Activated T-helper 1 cell treated with anti-CD3 and anti-CD28 coated beads, Interleukin-12 subunit alpha, Interleukin-12 subunit beta, Interleukin-2, Interleukin-4 antibody, amounts not matched to agents 30 ng/mL and 10 ng/mL and 1 ng/mL, durations not matched to agents 14 hours and 24 hours and 36 hours (primary cell): ENCODE measurements at regions of chr20 and their contacts with region 1.

Region 1: DNA sequence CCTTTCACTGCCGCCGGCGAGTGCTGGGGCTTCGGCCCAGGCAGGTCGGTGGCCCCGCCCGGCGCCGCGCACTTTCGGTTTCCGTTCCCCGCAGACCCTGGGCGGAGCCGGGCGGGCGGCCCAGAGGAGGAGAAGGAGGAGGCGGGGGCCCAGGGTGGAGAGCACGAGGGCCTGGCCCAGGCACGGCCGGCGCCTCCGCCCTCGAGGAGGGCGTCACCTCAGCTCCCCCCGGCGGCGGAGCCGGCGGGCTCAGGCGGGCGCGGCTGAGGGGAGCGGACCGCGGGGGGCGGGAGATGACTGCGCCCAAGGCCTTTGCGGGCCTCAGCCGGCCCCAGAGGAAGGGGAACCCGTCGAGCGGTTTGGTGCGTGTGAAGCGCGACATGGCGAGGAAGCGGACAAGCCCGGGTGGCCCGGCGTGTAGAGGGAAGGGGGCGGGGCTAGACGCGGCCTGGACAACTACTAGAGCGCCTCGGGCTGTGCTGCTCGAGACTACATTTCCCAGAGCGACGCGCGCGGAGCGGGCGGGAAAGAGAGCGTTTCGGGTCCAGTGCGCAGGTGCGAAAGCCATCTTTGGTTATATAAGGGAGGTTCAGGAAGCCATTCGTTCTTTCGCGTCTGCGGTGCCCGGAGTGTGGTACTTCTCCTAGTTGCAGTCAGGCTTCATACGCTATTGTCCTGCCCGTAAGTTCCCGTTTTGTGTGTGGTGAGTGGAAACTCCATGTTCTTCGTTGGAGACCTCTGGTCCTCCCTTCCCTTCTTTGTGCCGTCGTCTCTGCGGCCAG is at the start of gene ZNFX1:
- DNase-seq: peak; percentile 98
- H3K4me3 Mint-ChIP-seq: peak within 1 kb of the TSS; percentile 99
- H3K27ac Mint-ChIP-seq: peak within 1 kb of the TSS; percentile 98
- H3K4me1 Mint-ChIP-seq: peaks cover 61% of the 10 kb centered on the region
- H3K27me3 Mint-ChIP-seq: no peaks in the 10 kb centered on the region
- total RNA-seq, gene ZNFX1: 68.9 and 70.4 TPM in 2 replicates

Region 2: GRCh38 chr20:49046087-49046900 is 231.9 kb before region 1 on chr20 and contains the start of gene CSE1L:
- intact Hi-C with region 1: loop called (anchors 1 kb)
- DNase-seq: peak; percentile 94
- H3K4me3 Mint-ChIP-seq: peak within 1 kb of the TSS; percentile 88
- H3K27ac Mint-ChIP-seq: peak within 1 kb of the TSS; percentile 99
- H3K4me1 Mint-ChIP-seq: peaks cover 27% of the 10 kb centered on the region
- H3K27me3 Mint-ChIP-seq: peaks cover 2% of the 10 kb centered on the region
- total RNA-seq, gene CSE1L: 112 and 119 TPM in 2 replicates

Region 3: DNA sequence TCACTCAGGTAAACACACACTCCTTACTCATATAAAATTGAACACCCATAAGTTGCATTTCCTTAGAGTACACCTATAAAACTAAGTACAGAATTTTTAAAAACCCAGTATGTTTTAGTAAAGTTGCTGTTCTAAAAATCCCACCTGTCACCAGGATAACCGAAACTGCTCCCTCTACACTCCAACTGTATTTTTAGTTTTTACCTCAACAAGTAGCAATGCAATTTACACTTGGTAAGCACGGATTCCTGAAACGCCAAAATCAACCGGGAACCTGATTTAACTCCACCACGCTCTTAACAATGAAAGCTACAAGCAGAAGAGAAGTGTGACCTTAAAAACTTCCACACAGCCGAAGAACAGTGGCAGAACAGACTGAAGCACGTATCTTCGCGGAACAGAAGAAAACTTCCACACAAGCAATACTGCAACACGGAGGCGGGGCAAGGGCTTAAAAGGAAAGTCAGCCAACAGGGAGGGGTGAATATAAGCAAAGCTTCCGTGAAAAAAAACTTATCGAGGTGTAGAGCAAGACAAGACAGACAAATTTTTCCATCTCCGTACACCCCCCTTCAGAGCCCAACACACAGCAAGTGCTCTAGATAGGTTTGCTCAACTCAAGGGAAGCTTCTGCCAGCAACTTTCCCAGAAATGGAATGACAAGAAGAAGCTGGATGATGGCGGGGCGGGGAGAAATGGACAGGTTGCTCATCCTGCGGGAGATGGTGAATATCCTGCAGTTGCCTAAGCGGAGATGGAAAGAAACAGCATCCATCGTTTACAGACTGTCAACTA is 91.5 kb before region 1 on chr20:
- intact Hi-C with region 1: loop called (anchors 1 kb)
- DNase-seq: peak; percentile 66
- H3K4me3 Mint-ChIP-seq: peak overlapping the region; percentile 89
- H3K27ac Mint-ChIP-seq: peak overlapping the region; percentile 81
- H3K4me1 Mint-ChIP-seq: peaks cover 50% of the 10 kb centered on the region
- H3K27me3 Mint-ChIP-seq: peaks cover 4% of the 10 kb centered on the region

Region 4: DNA sequence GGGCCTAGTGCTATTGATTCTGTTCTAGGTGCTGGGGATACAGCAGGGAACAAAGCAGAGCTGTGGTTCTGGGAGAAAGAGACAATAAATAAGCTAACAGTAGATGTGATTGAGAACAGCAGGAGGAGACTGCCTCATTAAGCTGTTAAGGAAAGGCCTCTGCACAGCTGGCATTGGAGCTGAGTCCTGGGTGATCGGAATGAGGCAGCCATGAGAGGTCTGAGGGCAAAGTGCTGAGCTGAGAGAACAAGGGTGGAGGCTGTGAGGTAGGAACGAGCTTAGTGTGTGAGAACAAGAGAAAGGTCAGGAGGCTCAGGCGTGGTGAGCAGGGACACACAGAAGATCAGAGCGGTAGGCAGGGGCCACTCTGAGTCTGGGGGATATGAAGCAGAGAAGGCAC is 40.7 kb before region 1 on chr20:
- intact Hi-C with region 1: no loop called
- DNase-seq: no peak
- H3K4me3 Mint-ChIP-seq: no peak overlapping the region
- H3K27ac Mint-ChIP-seq: no peak overlapping the region
- H3K4me1 Mint-ChIP-seq: no peaks in the 10 kb centered on the region
- H3K27me3 Mint-ChIP-seq: no peaks in the 10 kb centered on the region

Region 5: GRCh38 chr20:49323622-49324238 is 45.5 kb after region 1 on chr20:
- intact Hi-C with region 1: loop called (anchors 1 kb)
- DNase-seq: peak; percentile 30
- H3K4me3 Mint-ChIP-seq: no peak overlapping the region
- H3K27ac Mint-ChIP-seq: peak overlapping the region; percentile 6
- H3K4me1 Mint-ChIP-seq: peaks cover 35% of the 10 kb centered on the region
- H3K27me3 Mint-ChIP-seq: peaks cover 44% of the 10 kb centered on the region

Region 6: DNA sequence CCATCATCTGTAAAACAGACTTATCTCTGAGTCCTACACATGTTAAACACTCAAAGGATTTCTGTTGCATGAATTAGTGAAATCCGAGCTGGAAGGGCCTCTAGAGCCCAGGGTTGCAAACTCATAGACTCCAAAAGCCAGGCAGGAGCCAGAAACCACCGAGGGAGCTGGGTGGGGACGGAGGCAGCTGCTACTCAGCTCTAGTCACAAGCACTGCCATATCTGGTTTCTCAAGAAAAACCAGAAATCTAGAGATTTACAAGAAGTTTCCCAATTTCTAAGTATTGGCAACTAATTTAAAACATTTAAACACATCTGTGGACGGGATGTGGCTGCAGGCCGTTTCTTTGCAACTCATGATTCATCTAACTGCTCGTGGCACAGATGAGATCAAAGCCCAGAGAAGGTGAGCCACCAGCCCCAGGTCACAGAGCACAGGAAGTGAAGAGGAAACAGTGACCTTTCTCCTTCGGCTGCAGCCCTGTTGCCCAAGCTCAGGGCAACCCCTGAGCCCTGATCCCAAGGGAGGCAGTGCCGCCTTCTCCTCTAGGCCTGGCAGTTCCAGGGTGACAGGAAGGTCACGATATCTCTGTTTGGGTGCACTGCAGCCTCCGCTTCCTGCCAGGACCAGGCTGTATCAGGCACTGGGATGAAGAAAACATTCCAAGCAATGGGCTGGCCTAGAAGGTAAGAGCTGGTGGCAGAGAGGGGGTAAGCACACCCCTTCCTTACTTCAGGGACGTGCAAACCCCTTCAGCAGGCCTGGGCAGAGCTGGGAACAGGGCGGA is 316.1 kb after region 1 on chr20:
- intact Hi-C with region 1: loop called (anchors 2 kb)
- DNase-seq: peak; percentile 76
- H3K4me3 Mint-ChIP-seq: peak overlapping the region; percentile 81
- H3K27ac Mint-ChIP-seq: peak overlapping the region; percentile 99
- H3K4me1 Mint-ChIP-seq: peaks cover 90% of the 10 kb centered on the region
- H3K27me3 Mint-ChIP-seq: no peaks in the 10 kb centered on the region

Region 7: DNA sequence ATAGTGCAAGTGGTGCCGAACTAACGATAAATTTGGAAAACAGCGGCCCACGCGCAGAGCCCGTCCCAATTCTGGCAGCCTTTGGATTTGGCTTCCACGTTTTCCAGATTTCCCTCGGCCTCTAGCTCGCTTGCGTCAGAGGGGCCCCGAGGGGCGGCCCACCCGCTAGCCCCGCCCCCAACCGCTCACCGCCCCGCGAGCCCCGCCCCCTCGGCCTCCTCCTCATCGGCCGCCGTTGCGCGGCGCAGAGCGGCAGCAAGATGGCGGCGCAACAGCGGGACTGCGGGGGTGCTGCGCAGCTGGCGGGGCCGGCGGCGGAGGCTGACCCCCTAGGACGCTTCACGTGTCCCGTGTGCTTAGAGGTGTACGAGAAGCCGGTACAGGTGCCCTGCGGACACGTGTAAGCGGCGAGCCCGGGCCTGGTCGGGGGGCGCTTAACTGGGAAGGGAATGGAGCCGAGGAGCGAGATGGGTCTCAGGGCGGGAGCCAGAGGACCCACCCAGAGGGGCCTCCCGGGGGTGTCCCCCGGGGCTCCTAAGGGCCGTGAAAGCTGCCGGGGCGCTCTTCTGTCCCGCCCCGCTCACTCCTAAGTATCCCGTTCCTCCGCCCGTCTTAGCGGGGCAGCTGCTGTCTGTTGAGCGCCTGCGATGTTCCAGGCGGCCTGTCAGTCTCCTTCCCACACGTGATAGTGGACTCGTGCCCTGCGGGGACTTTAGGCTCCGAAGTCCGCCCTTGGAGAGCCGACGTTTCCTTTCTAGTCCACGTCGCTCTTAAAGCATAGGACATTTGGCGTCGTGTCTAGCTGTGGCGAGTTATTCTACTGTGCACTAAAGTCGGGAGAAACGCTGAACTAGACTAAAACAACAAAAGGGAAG is 658.2 kb after region 1 on chr20 and contains the start of gene RNF114:
- intact Hi-C with region 1: loop called (anchors 2 kb)
- DNase-seq: peak; percentile 82
- H3K4me3 Mint-ChIP-seq: peak within 1 kb of the TSS; percentile 94
- H3K27ac Mint-ChIP-seq: peak within 1 kb of the TSS; percentile 93
- H3K4me1 Mint-ChIP-seq: peaks cover 34% of the 10 kb centered on the region
- H3K27me3 Mint-ChIP-seq: no peaks in the 10 kb centered on the region
- total RNA-seq, gene RNF114: 58.7 and 60.3 TPM in 2 replicates